Activated CD4-positive, alpha-beta memory T cell treated with anti-CD3 and anti-CD28 coated beads, Interleukin-2, amount 10 ng/mL, durations not matched to agents 7 days and 5 days (primary cell): ENCODE measurements at regions of chr7 and their contacts with region 1.

Region 1: DNA sequence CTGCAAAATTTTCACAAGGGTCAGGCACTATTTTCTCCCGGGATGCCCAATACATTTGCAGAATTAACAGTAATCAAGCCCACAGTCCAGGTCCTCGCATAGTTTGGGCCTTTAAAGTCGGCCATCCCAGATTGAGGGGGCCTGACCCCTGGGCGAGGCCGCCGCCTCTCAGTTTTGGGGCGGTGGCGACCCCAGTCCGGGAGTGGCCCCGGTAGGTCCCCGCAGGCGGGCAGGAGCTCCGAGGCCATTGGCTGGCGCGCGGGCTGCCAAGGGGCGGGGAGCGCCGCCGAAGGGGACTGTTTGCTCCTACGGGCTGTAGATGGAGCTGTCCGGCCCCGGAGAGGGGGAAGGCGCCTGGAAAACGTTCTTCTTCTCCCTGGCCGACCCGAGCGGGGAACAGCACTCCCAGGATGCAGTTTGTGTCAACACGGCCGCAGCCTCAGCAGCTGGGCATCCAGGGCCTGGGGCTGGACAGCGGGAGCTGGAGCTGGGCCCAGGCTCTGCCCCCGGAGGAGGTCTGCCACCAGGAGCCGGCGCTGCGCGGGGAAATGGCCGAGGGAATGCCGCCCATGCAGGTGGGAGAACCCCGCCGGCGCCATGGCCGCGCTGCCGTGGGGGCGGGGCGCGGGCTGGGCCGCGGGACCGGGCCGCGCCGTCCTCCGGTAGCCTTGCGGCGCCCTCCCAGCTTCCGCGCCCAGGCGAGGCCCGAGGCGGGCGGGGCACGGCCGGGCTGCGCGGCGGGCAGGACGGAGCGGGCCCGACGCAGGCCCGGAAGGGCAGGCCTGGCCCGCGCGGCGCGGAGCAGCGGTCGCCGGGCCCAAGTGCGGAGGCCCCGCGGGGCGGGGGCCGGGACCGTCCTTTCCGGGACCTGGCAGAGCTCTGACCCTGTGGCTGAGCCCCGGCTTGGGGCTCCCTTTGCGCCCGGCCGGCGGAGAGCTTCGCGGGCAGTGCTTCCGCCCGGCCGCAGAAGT is at the start of gene ZNF282:
- DNase-seq: peak; percentile 81
- H3K4me3 Mint-ChIP-seq: peak within 1 kb of the TSS; percentile 96
- H3K27ac Mint-ChIP-seq: peak within 1 kb of the TSS; percentile 94
- H3K4me1 Mint-ChIP-seq: peaks cover 57% of the 10 kb centered on the region
- H3K27me3 Mint-ChIP-seq: no peaks in the 10 kb centered on the region
- total RNA-seq, gene ZNF282: 66.1 to 66.6 TPM

Region 2: GRCh38 chr7:149161241-149161848 is 34.1 kb before region 1 on chr7:
- CTCF ChIA-PET with region 1: no interaction called
- POLR2A ChIA-PET with region 1: no interaction called
- DNase-seq: no peak
- H3K4me3 Mint-ChIP-seq: no peak overlapping the region
- H3K27ac Mint-ChIP-seq: peak overlapping the region; percentile 71
- H3K4me1 Mint-ChIP-seq: peaks cover 23% of the 10 kb centered on the region
- H3K27me3 Mint-ChIP-seq: no peaks in the 10 kb centered on the region

Region 3: DNA sequence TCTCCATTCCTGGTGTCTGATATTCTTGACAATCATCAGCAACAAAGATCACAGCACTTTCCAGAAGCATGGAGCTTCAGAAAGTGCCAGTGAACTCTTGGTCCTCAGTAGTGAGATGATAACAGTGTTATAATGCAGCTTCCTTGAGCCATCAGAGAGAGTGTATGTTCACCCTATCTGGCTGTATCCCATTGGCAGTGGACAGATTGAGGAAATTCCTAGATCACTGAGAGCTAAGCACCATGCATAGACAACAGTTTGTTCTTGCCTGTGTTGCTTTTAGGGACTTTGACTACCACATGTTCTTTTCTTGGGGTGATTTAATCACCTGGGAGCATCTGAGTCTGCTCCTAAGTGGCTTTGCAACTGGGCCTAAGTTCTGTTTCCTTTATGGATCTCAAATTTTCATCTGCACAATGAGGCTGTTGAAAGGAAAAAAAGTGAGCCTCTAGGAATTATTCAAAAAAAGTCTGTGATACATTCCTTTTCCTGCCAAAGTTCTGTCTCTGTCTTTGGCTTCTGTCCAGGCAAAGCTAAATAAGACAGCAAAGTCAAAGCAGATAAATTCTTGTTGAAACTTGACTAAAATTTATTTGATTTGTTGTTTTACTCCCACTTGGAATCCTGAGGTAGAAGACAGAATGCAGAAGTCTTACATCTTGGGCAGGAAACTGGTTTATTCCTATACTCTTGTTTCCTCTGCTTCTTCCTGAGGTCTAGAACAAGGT is 14.6 kb before region 1 on chr7:
- CTCF ChIA-PET with region 1: interaction called, 13 read pairs
- POLR2A ChIA-PET with region 1: interaction called, 5 read pairs
- DNase-seq: no peak
- H3K4me3 Mint-ChIP-seq: no peak overlapping the region
- H3K27ac Mint-ChIP-seq: no peak overlapping the region
- H3K4me1 Mint-ChIP-seq: peaks cover 2% of the 10 kb centered on the region
- H3K27me3 Mint-ChIP-seq: no peaks in the 10 kb centered on the region

Region 4: GRCh38 chr7:149209518-149210269 is 14.2 kb after region 1 on chr7:
- CTCF ChIA-PET with region 1: interaction called, 16 read pairs
- POLR2A ChIA-PET with region 1: interaction called, 33 read pairs
- DNase-seq: peak; percentile 90
- H3K4me3 Mint-ChIP-seq: peak overlapping the region; percentile 28
- H3K27ac Mint-ChIP-seq: peak overlapping the region; percentile 83
- H3K4me1 Mint-ChIP-seq: peaks cover 60% of the 10 kb centered on the region
- H3K27me3 Mint-ChIP-seq: no peaks in the 10 kb centered on the region